ENCODE measurements at regions of chr2 and their contacts with region 1.

Region 1: DNA sequence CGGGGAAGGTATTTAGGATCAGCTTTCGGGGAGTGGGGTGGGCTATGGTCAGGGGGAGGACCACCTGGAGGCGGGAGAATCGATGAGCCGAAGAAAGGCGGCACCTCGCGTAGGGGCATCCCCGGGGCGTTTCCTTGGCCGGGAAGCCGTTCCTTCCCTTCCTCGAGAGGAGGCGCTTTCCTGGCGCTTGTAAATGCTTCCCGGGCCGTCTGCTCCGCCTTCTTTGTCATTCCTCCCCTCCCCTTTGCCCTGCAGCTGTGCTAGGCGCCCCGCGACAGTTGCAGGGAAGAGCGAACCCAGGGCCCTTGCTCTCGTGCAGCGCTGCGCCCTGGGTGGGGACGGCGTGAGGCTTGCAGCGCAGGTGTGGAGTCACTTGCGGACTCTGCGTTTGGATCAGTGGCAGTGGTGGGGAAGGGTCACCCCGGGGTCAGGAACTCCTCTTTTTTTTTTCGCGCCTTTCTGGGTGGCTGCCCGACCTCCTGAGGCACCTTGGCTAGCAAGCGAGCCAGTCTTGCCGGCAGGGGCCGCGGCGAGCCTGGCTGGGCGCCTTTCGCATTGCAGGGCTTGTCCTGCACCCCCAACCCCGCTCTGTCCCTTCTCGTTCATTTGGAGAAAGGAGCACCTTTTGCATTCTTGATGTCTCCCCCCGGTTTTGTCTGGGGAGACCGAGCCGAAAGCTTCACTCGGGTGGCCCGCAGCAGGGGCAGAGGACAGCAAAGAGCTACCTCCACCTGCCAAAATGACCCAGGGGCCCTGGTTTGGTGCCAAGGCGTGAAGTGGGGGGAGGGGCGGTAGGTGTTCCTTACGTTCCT is 840 bp downstream of the KCNS3 start:
- DNase-seq: peak; percentile 73
- ATAC-seq: peak; percentile 87
- H3K4me3 ChIP-seq: peak overlapping the region; percentile 61 to 70
- H3K27ac ChIP-seq: no peak overlapping the region; the same call in 1 of the 2 replicates
- H3K4me1 ChIP-seq: peaks cover 3 to 22% of the 10 kb centered on the region in 2 experiments; a peak in 3 of 4 replicates
- H3K27me3 ChIP-seq: peaks cover 13% of the 10 kb centered on the region; the same call in 1 of the 2 replicates
- CTCF ChIP-seq: peak in 2 of 3 experiments; percentile 11 to 14; a peak in 1 of 6 replicates
- POLR2A ChIP-seq: no peak
- RAD21 ChIP-seq: peak; percentile 27; the same call in 1 of the 2 replicates

Region 2: GRCh38 chr2:17753803-17754663 is 125.3 kb before region 1 on chr2 and contains the starts of genes GEN1 and SMC6:
- CTCF ChIA-PET with region 1: interaction called, 3 read pairs
- POLR2A ChIA-PET with region 1: no interaction called
- RAD21 ChIA-PET with region 1: no interaction called
- intact Hi-C with region 1: loop called (anchors 5 kb)
- DNase-seq: peak; percentile 81
- ATAC-seq: peak; percentile 84
- H3K4me3 ChIP-seq: peak within 1 kb of the TSS; percentile 82 to 91
- H3K27ac ChIP-seq: peak within 1 kb of the TSS; percentile 95
- H3K4me1 ChIP-seq: peaks cover 8 to 23% of the 10 kb centered on the region in 2 experiments; a peak in 3 of 4 replicates
- H3K27me3 ChIP-seq: no peaks in the 10 kb centered on the region
- CTCF ChIP-seq: no peak
- POLR2A ChIP-seq: peak; percentile 51
- RAD21 ChIP-seq: no peak
- total RNA-seq, gene GEN1: 19.7 TPM
- total RNA-seq, gene SMC6: 26.4 TPM

Region 3: GRCh38 chr2:18171191-18172139 is 292.2 kb after region 1 on chr2:
- CTCF ChIA-PET with region 1: no interaction called
- POLR2A ChIA-PET with region 1: no interaction called
- RAD21 ChIA-PET with region 1: no interaction called
- intact Hi-C with region 1: no loop called
- DNase-seq: no peak
- ATAC-seq: no peak
- H3K4me3 ChIP-seq: no peak overlapping the region
- H3K27ac ChIP-seq: no peak overlapping the region
- H3K4me1 ChIP-seq: no peaks in the 10 kb centered on the region
- H3K27me3 ChIP-seq: no peaks in the 10 kb centered on the region
- CTCF ChIP-seq: no peak
- POLR2A ChIP-seq: no peak
- RAD21 ChIP-seq: no peak